Activated CD4-positive, alpha-beta memory T cell treated with anti-CD3 and anti-CD28 coated beads for 36 hours (primary cell): ENCODE measurements at regions of chr7 and their contacts with region 1.

Region 1: GRCh38 chr7:7830122-7830878 is 111.9 kb upstream of the RPA3 start:
- DNase-seq: no peak
- H3K4me3 Mint-ChIP-seq: no peak overlapping the region
- H3K27ac Mint-ChIP-seq: peak overlapping the region; percentile 5
- H3K4me1 Mint-ChIP-seq: peaks cover 11% of the 10 kb centered on the region
- H3K27me3 Mint-ChIP-seq: no peaks in the 10 kb centered on the region

Region 2: DNA sequence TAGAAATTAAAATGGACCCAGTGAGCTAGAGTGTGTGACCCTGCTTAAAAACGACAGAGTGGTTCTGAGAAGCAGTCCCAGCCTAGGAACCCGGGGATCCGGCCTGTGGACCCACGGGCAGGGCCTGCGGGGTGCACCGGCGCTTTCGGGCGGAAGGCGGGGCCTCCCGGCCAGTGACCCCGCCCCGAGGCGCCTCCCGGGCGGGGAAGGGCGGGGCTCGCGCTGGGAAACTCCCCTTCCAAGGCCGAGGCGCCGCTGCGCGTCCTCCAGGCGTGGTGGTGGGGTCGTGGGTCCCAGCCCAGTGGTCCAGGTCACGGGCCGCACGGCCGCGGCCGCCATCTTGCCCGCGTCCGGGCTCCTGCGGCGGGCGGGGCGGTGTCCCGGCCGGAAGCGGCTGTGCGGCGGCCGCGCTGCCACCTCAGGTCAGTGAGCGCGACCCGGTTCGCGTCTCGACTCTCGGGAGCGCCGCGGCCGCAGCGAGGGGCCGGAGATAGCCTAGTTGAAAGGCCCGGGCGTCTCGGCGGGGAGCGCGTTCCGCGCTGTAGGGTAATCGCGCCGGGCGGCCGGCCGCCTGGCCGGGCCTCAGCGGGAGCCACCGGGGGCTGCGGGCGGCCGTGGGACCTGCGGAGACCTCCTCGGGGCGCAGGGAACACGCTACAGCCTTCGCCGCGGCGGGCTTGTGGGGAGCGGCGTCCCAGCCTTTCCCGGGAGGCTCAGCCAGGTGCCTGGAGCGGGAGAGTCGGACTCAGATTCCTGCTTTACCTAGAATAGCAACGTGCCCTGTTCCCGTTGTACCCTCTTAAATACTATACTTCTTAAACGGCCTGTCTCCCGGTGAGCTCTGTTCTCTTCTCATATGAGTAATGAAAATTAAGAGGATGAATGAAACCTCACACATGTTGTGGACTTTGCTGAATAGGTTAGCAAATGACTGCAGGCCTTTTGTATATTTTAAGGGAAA is 263.4 kb before region 1 on chr7 and contains the start of gene MIOS:
- CTCF ChIA-PET with region 1: no interaction called
- POLR2A ChIA-PET with region 1: no interaction called
- intact Hi-C with region 1: no loop called
- DNase-seq: peak; percentile 85
- H3K4me3 Mint-ChIP-seq: peak within 1 kb of the TSS; percentile 81
- H3K27ac Mint-ChIP-seq: peak within 1 kb of the TSS; percentile 75
- H3K4me1 Mint-ChIP-seq: peaks cover 29% of the 10 kb centered on the region
- H3K27me3 Mint-ChIP-seq: no peaks in the 10 kb centered on the region
- total RNA-seq, gene MIOS: 37.2 to 37.7 TPM

Region 3: GRCh38 chr7:7789551-7789988 is 40.7 kb before region 1 on chr7:
- CTCF ChIA-PET with region 1: no interaction called
- POLR2A ChIA-PET with region 1: no interaction called
- intact Hi-C with region 1: loop called (anchors 5 kb)
- DNase-seq: no peak
- H3K4me3 Mint-ChIP-seq: no peak overlapping the region
- H3K27ac Mint-ChIP-seq: no peak overlapping the region
- H3K4me1 Mint-ChIP-seq: peaks cover 7% of the 10 kb centered on the region
- H3K27me3 Mint-ChIP-seq: no peaks in the 10 kb centered on the region

Region 4: DNA sequence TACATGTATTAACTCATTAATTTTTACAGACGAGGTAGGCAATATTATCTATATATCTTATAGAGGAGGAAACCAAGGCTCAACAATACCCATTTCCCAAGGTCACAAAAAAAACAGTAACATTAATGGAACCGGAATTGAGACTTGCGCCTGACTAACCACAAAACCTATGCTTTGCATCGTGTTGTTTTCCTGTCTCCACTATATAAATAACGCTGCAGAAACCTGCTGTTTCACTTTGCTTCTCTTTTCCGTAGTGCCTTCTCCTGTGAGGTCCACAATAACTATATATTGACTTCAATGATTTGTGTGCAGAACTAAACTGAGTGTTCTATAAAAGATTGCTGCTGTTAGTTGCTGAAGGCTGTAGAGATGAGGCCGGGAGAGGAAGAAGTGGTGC is 14.2 kb before region 1 on chr7:
- CTCF ChIA-PET with region 1: no interaction called
- POLR2A ChIA-PET with region 1: no interaction called
- intact Hi-C with region 1: loop called (anchors 2 kb)
- DNase-seq: no peak
- H3K4me3 Mint-ChIP-seq: no peak overlapping the region
- H3K27ac Mint-ChIP-seq: no peak overlapping the region
- H3K4me1 Mint-ChIP-seq: peaks cover 39% of the 10 kb centered on the region
- H3K27me3 Mint-ChIP-seq: no peaks in the 10 kb centered on the region

Region 5: GRCh38 chr7:7884855-7885254 is 54.6 kb after region 1 on chr7:
- CTCF ChIA-PET with region 1: no interaction called
- POLR2A ChIA-PET with region 1: no interaction called
- intact Hi-C with region 1: loop called (anchors 2 kb)
- DNase-seq: no peak
- H3K4me3 Mint-ChIP-seq: no peak overlapping the region
- H3K27ac Mint-ChIP-seq: no peak overlapping the region
- H3K4me1 Mint-ChIP-seq: no peaks in the 10 kb centered on the region
- H3K27me3 Mint-ChIP-seq: no peaks in the 10 kb centered on the region

Region 6: DNA sequence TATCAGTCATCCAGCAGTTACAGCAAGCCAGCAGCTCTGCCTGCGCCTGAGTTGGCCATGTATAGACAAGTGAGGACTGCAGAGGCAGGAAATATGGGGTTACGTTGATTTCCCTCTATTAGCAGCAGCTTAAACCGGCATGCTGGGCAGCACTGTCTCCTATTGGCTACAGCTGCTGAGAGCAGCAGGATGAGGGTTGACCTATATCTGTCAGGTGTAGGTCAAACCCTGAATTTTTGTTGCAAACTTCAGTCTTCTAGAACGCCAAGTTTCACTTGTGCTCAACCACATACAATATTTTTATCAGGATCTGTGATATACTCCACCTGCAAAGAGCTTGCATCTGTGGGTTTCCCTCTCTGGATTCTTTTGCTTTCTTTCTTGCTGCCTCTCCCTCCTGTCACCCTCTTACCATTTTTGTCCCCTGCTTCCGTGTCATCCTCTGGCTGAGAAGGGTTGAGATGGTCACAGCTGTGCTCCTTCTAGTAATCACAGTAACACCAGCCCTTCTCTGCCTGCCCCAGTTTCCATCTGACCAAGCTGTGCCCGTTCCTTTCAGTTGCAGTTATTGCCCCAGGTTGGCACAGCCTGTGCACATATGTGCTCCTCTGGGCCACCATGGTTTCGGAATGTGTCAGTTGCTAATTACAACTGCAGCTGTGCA is 114.5 kb after region 1 on chr7:
- CTCF ChIA-PET with region 1: no interaction called
- POLR2A ChIA-PET with region 1: no interaction called
- intact Hi-C with region 1: no loop called
- DNase-seq: peak; percentile 84
- H3K4me3 Mint-ChIP-seq: peak overlapping the region; percentile 71
- H3K27ac Mint-ChIP-seq: peak overlapping the region; percentile 89
- H3K4me1 Mint-ChIP-seq: peaks cover 26% of the 10 kb centered on the region
- H3K27me3 Mint-ChIP-seq: no peaks in the 10 kb centered on the region